ENCODE measurements at regions of chr11 and their contacts with region 1.

Region 1: GRCh38 chr11:44326615-44327475 is 16.9 kb upstream of the ALX4 start:
- DNase-seq: no peak
- ATAC-seq: peak; percentile 42 to 72; a peak in 4 of 6 replicates
- H3K4me3 ChIP-seq: no peak overlapping the region
- H3K27ac ChIP-seq: no peak overlapping the region
- H3K4me1 ChIP-seq: peaks cover 20% of the 10 kb centered on the region
- CTCF ChIP-seq: peak; percentile 20; the same call in 1 of the 3 replicates
- EP300 ChIP-seq: no peak
- POLR2A ChIP-seq: no peak
- RAD21 ChIP-seq: peak; percentile 37 to 49; a peak in 3 of 5 replicates

Region 2: GRCh38 chr11:44315947-44316658 is 10.7 kb before region 1 on chr11:
- CTCF ChIA-PET with region 1: interaction called, 22 read pairs
- POLR2A ChIA-PET with region 1: no interaction called
- DNase-seq: peak; percentile 44 to 69
- ATAC-seq: peak; percentile 81 to 84
- H3K4me3 ChIP-seq: peak overlapping the region; percentile 54
- H3K27ac ChIP-seq: peak overlapping the region; percentile 77 to 94
- H3K4me1 ChIP-seq: peaks cover 16% of the 10 kb centered on the region; the same call in 2 of the 3 replicates
- CTCF ChIP-seq: no peak
- EP300 ChIP-seq: no peak
- POLR2A ChIP-seq: no peak
- RAD21 ChIP-seq: peak in 1 of 2 experiments; percentile 19; a peak in 1 of 5 replicates

Measured in A549 (cell line).